Activated CD4-positive, alpha-beta T cell treated with anti-CD3 and anti-CD28 coated beads for 36 hours (primary cell): ENCODE measurements at regions of chr2 and their contacts with region 1.

Region 1: GRCh38 chr2:8681786-8682692 is at the start of gene ID2:
- DNase-seq: peak; percentile 99
- ATAC-seq: peak; percentile 73
- H3K4me3 Mint-ChIP-seq: peak within 1 kb of the TSS; percentile 98
- H3K27ac Mint-ChIP-seq: peak within 1 kb of the TSS; percentile 97
- H3K4me1 Mint-ChIP-seq: peaks cover 34% of the 10 kb centered on the region
- H3K27me3 Mint-ChIP-seq: peaks cover 10% of the 10 kb centered on the region
- total RNA-seq, gene ID2: 171 to 213 TPM

Region 2: DNA sequence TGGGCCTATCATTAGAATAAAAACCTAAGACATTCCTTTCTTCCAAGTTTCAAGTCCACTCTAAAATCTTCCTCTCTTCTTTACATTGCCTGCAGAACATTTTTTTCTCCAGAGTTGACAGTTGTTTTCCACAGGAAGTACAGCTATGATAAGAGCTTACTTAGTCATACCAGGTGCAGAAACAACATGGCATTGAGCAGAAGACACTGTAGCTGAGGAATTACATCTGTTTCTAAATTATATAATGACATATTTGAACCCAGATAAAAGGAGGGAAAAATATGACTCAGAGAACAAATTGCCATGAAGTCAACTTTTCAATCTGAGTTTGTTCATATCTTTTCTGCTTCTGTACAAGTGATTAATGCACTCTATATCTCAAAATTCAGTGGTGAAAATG is 1846.6 kb before region 1 on chr2:
- CTCF ChIA-PET with region 1: no interaction called
- POLR2A ChIA-PET with region 1: no interaction called
- intact Hi-C with region 1: loop called in 1 of 2 experiments (anchors 10 kb)
- DNase-seq: no peak
- ATAC-seq: peak; percentile 92
- H3K4me3 Mint-ChIP-seq: no peak overlapping the region
- H3K27ac Mint-ChIP-seq: no peak overlapping the region
- H3K4me1 Mint-ChIP-seq: peaks cover 18% of the 10 kb centered on the region
- H3K27me3 Mint-ChIP-seq: no peaks in the 10 kb centered on the region

Region 3: DNA sequence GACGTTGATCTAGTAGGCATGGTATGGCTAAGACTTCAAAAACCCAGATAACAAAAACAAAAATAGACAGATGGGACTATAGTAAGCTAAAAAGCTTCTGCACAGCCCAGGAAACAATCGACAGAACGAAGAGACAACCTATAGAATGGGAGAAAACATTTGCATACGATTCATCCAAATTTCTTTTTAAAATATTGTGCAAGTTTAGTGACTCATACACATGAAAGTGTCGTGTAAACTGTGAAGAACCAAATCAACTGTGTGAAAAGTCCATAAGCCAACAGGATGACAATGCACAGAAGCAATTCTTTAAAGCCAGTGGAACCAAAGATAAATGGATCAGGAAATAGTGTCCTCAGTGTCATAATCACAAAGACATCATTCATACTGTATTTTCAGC is 1093.7 kb before region 1 on chr2:
- CTCF ChIA-PET with region 1: no interaction called
- POLR2A ChIA-PET with region 1: no interaction called
- intact Hi-C with region 1: loop called in 1 of 2 experiments (anchors 10 kb)
- DNase-seq: no peak
- ATAC-seq: peak; percentile 71
- H3K4me3 Mint-ChIP-seq: no peak overlapping the region
- H3K27ac Mint-ChIP-seq: peak overlapping the region; percentile 71
- H3K4me1 Mint-ChIP-seq: peaks cover 41% of the 10 kb centered on the region
- H3K27me3 Mint-ChIP-seq: no peaks in the 10 kb centered on the region

Region 4: GRCh38 chr2:7930800-7931635 is 751.0 kb before region 1 on chr2:
- CTCF ChIA-PET with region 1: no interaction called
- POLR2A ChIA-PET with region 1: no interaction called
- intact Hi-C with region 1: loop called (anchors 1 to 5 kb)
- DNase-seq: peak; percentile 56
- ATAC-seq: peak; percentile 80
- H3K4me3 Mint-ChIP-seq: peak overlapping the region; percentile 0
- H3K27ac Mint-ChIP-seq: peak overlapping the region; percentile 93
- H3K4me1 Mint-ChIP-seq: peaks cover 33% of the 10 kb centered on the region
- H3K27me3 Mint-ChIP-seq: no peaks in the 10 kb centered on the region

Region 5: DNA sequence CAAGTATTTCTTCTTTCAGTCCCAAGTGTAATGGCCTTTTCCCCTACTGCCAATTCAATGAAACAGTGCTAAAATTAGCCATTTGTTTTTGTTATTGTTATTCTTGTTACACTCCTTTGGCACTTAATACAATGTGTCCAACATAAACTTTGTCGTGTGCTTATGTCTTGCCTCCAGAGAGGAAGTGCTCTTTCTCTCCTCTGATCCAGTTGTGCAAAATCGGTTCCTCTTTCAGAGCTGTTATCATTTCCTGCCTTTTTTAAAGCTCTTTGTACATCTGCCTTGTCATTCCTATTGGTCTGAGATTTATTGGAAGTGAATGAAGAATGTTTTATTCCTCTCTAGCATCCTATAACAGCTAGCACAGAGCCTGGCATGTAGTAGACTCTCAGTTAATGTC is 623.4 kb before region 1 on chr2:
- CTCF ChIA-PET with region 1: no interaction called
- POLR2A ChIA-PET with region 1: no interaction called
- intact Hi-C with region 1: no loop called
- DNase-seq: no peak
- ATAC-seq: no peak
- H3K4me3 Mint-ChIP-seq: no peak overlapping the region
- H3K27ac Mint-ChIP-seq: no peak overlapping the region
- H3K4me1 Mint-ChIP-seq: peaks cover 14% of the 10 kb centered on the region
- H3K27me3 Mint-ChIP-seq: no peaks in the 10 kb centered on the region

Region 6: DNA sequence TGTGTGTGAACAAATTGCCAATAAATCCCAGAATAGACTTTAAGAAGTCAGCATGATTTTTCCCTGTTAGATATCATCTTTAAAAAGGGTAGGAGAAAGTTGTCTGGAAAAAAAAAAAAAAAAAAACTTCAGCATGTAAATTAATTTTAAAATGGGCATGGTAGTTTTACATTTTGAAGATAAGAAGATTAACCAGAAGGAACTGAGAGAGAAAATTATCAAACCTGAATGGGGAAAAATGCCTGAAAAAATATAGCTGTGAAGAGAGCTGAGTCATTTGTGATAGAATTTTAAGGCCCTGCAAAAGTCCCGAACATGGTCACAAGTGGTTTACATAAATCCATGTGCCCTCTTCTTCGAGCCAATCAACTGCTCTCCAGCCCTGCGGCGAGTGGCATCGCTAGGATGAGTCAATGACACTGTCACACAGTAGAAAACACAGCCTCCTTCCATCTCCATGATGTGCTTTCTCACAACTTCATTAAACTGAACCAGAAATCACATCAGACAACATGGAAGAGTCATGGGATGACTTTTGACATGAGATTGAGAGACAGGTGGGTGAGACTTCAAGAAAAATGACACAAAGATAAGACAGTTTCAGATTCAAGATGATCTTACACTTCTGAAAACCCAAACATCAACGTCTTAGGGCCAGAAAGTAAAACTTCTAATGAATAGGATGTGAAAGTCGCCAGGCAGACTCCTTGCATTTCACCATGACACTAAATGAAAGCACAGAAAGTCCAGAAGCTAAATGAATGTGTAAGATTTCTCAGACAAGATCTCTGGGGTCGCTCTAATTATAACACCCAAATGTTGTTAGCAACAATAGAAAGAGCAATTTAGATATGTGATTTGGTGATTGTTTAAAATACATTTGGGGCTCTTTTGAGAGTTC is 273.2 kb before region 1 on chr2:
- CTCF ChIA-PET with region 1: no interaction called
- POLR2A ChIA-PET with region 1: interaction called, 13 read pairs
- intact Hi-C with region 1: loop called (anchors 1 kb)
- DNase-seq: peak; percentile 88
- ATAC-seq: peak; percentile 97
- H3K4me3 Mint-ChIP-seq: peak overlapping the region; percentile 28
- H3K27ac Mint-ChIP-seq: peak overlapping the region; percentile 84
- H3K4me1 Mint-ChIP-seq: peaks cover 33% of the 10 kb centered on the region
- H3K27me3 Mint-ChIP-seq: peaks cover 10% of the 10 kb centered on the region

Region 7: DNA sequence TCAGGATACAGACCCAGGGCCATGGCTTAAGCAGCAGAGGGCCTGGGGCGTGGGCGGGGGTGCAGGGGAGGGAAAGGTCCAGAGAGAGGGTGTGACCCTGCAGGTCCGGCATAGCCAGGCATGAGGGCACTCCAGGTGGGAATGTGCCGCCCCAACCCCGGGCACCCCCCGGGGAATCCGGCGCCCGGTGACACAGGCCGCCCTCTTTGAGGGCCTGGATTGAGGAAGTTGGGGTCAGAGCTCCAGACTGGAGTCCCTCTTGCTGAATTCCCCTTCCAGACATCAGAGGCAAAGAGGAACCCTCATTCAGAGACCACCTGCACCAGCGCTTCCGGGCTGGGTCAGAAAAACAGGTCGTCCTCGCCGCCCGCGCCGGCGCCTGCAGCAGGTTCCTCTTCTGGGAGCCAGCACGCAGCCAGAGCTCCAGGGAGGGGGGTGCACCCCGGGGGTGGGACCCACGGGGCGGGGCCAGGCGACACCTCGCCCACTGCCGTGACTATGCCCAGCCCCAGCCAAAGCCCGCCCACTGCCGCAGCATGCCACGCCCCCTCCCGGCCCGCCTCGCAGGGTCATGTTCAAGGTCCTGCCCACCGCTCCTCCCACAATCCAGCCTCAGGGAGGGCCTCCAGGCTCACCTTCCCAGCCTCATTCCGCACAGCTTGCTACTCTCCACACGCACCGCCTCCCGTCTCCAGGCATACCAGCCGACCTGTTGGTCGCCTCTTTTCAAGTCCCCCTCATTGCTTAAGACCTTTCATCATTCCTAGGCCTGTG is 98.5 kb before region 1 on chr2:
- CTCF ChIA-PET with region 1: interaction called, 3 read pairs
- POLR2A ChIA-PET with region 1: interaction called, 8 read pairs
- intact Hi-C with region 1: loop called in 1 of 2 experiments (anchors 1 kb)
- DNase-seq: peak; percentile 91
- ATAC-seq: peak; percentile 69
- H3K4me3 Mint-ChIP-seq: peak overlapping the region; percentile 24
- H3K27ac Mint-ChIP-seq: no peak overlapping the region
- H3K4me1 Mint-ChIP-seq: peaks cover 56% of the 10 kb centered on the region
- H3K27me3 Mint-ChIP-seq: peaks cover 5% of the 10 kb centered on the region

Region 8: DNA sequence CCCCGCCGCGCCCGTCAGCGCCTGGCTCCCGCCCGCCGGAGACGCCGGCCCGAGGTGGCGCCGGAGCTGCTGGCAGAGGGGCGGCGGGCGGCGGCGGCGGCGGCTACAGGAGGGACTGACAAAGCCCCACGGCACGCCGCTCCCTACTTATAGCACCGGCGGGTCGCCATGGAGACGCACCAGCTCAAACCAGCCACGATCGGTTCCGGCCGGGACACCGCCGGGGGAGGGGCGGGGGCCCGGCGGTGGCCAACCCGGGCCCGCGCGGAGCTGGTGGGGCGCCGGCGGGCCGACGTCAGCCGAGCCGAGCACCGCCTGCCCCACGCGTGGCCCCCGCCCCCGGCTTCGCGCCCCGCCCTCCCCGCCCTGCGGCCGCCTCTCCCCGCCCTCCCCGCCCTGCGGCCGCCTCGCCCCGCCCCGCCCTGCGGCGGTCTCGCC is 1766.2 kb after region 1 on chr2 and contains the start of gene ODC1:
- CTCF ChIA-PET with region 1: no interaction called
- POLR2A ChIA-PET with region 1: no interaction called
- intact Hi-C with region 1: loop called in 1 of 2 experiments (anchors 5 kb)
- DNase-seq: peak; percentile 97
- ATAC-seq: peak; percentile 74
- H3K4me3 Mint-ChIP-seq: peak within 1 kb of the TSS; percentile 85
- H3K27ac Mint-ChIP-seq: peak within 1 kb of the TSS; percentile 95
- H3K4me1 Mint-ChIP-seq: peaks cover 51% of the 10 kb centered on the region
- H3K27me3 Mint-ChIP-seq: no peaks in the 10 kb centered on the region
- total RNA-seq, gene ODC1: 158 to 170 TPM